Dorsolateral prefrontal cortex (tissue), 120 donors: ENCODE measurements at regions of chr11 and their contacts with region 1.

Region 1: GRCh38 chr11:73404048-73404447 is 27.8 kb downstream of the RELT start:
- DNase-seq: peak in 8 of 10 donors; percentile 55 to 79 (median 72)
- H3K4me3 ChIP-seq: no peak overlapping the region
- H3K27ac ChIP-seq: peak overlapping the region in 29 of 59 donors; percentile 3 to 68 (median 37)
- H3K27me3 ChIP-seq: no peaks in the 10 kb centered on the region
- CTCF ChIP-seq: peak; percentile 32 to 88 (median 74)

Region 2: GRCh38 chr11:73521621-73522020 is 117.6 kb after region 1 on chr11:
- intact Hi-C with region 1: loop called in 1 of 2 experiments (anchors 10 kb)
- DNase-seq: no peak
- H3K4me3 ChIP-seq: no peak overlapping the region
- H3K27ac ChIP-seq: peak overlapping the region in 44 of 59 donors; percentile 1 to 83 (median 52)
- H3K27me3 ChIP-seq: no peaks in the 10 kb centered on the region
- CTCF ChIP-seq: no peak

Region 3: DNA sequence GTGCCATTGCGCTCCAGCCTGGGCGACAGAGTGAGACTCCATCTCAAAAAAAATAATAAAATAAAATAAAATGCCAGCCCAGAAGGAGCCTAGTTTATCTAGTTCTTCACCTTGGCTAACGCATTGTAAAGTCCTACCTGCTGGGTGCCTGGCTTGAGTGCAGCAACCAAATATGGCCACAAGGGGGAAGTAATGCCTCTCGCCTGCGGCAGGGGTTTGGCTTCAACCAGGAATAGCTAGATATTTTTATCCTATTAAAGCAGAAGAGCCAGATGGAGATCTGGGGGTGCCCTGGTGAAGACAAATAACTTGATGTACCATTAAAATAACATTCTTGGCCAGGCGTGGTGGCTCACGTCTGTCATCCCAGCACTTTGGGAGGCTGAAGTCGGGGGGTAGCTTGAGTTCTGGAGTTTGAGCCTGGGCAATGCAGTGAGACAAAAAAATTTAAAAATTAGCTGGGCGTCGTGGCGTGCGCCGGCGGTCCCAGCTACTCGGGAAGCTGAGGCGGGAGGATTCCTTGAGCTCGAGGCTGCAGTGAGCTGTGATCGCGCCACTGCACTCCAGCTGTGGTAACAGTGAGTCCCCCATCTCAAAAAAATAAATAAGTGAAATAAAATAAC is 221.8 kb after region 1 on chr11:
- intact Hi-C with region 1: loop called in 1 of 2 experiments (anchors 10 kb)
- DNase-seq: peak; percentile 63 to 88 (median 80)
- H3K4me3 ChIP-seq: peak overlapping the region in 55 of 59 donors; percentile 3 to 59 (median 45)
- H3K27ac ChIP-seq: peak overlapping the region in 12 of 59 donors; percentile 23 to 64 (median 38)
- H3K27me3 ChIP-seq: no peaks in the 10 kb centered on the region
- CTCF ChIP-seq: peak; percentile 93 to 99 (median 98)